CD4-positive, alpha-beta memory T cell (primary cell): ENCODE measurements at regions of chr4 and their contacts with region 1.

Region 1: DNA sequence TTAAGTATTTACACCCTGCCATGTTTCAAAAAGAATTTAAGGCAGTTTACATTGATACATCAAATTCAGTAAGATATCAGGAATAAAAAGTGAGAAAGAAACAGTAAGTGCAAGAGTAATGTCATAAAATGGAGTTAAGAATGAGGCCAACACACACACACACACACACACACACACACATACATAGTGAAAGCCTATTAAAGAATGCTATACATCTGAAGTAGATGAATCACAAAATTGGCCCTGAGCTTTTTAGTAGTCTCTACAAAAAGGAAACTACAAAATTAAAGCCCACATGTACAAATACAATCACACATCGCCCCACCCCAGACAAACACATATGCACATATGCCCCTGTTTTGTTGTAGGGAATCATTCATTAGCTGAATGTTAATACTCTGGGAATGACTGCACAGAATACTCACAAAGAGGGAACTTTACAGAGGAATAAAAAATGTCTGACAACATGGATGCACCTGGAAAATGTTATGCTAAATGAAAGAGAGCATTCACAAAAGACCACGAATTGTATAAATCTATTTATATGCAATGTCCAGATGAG is 428.8 kb downstream of the IL15 start:
- DNase-seq: no peak
- H3K4me3 ChIP-seq: no peak overlapping the region
- H3K4me3 Mint-ChIP-seq: no peak overlapping the region
- H3K27ac ChIP-seq: no peak overlapping the region
- H3K27ac Mint-ChIP-seq: peak overlapping the region in 3 of 7 donors; percentile 34 to 67 (median 57)
- H3K4me1 ChIP-seq: no peaks in the 10 kb centered on the region
- H3K4me1 Mint-ChIP-seq: peaks cover 22 to 56% (median 41%) of the 10 kb centered on the region in 4 donors
- H3K27me3 ChIP-seq: no peaks in the 10 kb centered on the region
- H3K27me3 Mint-ChIP-seq: no peaks in the 10 kb centered on the region

Region 2: DNA sequence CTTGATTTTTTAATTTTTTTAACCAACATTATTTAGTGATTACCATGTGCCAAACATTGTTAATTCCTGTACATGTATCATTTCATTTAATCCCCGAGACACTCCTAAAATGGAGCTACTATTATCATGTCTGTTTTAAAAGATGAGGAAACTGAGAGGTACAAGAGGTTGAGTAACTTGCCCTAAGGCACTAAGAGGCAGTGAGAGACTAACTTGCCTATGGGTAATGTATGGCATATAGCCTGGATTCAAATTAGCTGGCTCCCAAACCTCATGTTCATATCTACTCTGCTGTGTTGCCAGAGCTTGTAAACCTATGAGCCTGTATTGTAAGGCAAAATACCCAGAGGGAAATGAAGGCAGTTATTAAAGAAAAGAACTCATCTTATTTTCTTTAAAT is 14.8 kb after region 1 on chr4:
- CTCF ChIA-PET with region 1: no interaction called
- POLR2A ChIA-PET with region 1: no interaction called
- intact Hi-C with region 1: loop called (anchors 2 kb)
- DNase-seq: no peak
- H3K4me3 ChIP-seq: no peak overlapping the region
- H3K4me3 Mint-ChIP-seq: no peak overlapping the region
- H3K27ac ChIP-seq: no peak overlapping the region
- H3K27ac Mint-ChIP-seq: peak overlapping the region in 1 of 7 donors; percentile 40
- H3K4me1 ChIP-seq: no peaks in the 10 kb centered on the region
- H3K4me1 Mint-ChIP-seq: peaks cover 0 to 12% (median 4%) of the 10 kb centered on the region in 4 donors
- H3K27me3 ChIP-seq: no peaks in the 10 kb centered on the region
- H3K27me3 Mint-ChIP-seq: no peaks in the 10 kb centered on the region